Activated CD4-positive, alpha-beta T cell treated with anti-CD3 and anti-CD28 coated beads for 36 hours (primary cell): ENCODE measurements at regions of chr3 and their contacts with region 1.

Region 1: DNA sequence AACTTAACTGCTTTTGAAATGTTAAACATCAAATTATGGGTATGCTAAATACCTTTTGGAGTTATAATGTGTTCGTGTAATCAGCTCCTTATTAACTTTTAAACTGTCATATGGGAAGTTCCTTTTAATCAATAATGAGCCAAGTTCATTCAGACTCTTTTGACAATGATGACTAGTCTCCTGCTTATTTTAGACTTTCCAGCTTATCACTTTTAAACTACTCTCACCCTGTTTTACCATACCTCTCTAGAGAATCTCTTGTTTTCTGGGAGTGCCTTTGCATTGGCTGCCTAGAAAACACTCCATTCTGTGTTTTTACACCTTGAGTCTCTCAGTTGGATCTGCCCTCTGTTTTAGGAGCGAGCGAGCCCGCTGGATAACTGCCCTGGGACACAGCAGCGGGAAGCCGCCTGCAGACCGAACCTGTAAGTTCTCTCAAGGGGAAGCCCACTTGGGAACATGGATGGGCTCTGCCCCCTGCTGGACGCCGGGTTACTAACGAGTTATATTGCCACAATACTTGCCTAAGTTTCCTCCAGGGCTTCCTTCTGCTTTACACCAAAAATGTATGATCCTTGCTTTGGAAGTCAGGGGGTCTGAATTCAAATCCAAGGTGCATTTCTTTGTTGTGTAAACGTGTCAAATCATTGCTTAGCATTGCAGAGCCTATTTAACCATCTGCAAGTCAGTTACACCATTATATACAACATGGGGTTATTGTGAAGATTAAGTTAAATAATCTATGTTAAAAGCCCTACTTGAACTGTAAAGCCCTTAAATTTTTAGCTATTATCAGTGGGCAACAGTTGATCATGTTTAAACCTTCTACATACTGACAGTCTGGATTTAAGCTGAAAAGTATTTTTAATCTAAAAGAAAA is 71.3 kb downstream of the DHX36 start:
- DNase-seq: peak; percentile 86
- ATAC-seq: peak; percentile 82
- H3K4me3 Mint-ChIP-seq: no peak overlapping the region
- H3K27ac Mint-ChIP-seq: no peak overlapping the region
- H3K4me1 Mint-ChIP-seq: no peaks in the 10 kb centered on the region
- H3K27me3 Mint-ChIP-seq: no peaks in the 10 kb centered on the region

Region 2: GRCh38 chr3:153026026-153026425 is 1227.0 kb before region 1 on chr3:
- CTCF ChIA-PET with region 1: no interaction called
- POLR2A ChIA-PET with region 1: no interaction called
- intact Hi-C with region 1: loop called in 1 of 2 experiments (anchors 5 kb)
- DNase-seq: no peak
- ATAC-seq: no peak
- H3K4me3 Mint-ChIP-seq: no peak overlapping the region
- H3K27ac Mint-ChIP-seq: no peak overlapping the region
- H3K4me1 Mint-ChIP-seq: no peaks in the 10 kb centered on the region
- H3K27me3 Mint-ChIP-seq: peaks cover 1% of the 10 kb centered on the region

Region 3: GRCh38 chr3:154040286-154040685 is 212.7 kb before region 1 on chr3:
- CTCF ChIA-PET with region 1: no interaction called
- POLR2A ChIA-PET with region 1: no interaction called
- intact Hi-C with region 1: loop called (anchors 1 to 2 kb)
- DNase-seq: no peak
- ATAC-seq: peak; percentile 44
- H3K4me3 Mint-ChIP-seq: no peak overlapping the region
- H3K27ac Mint-ChIP-seq: no peak overlapping the region
- H3K4me1 Mint-ChIP-seq: no peaks in the 10 kb centered on the region
- H3K27me3 Mint-ChIP-seq: no peaks in the 10 kb centered on the region

Region 4: DNA sequence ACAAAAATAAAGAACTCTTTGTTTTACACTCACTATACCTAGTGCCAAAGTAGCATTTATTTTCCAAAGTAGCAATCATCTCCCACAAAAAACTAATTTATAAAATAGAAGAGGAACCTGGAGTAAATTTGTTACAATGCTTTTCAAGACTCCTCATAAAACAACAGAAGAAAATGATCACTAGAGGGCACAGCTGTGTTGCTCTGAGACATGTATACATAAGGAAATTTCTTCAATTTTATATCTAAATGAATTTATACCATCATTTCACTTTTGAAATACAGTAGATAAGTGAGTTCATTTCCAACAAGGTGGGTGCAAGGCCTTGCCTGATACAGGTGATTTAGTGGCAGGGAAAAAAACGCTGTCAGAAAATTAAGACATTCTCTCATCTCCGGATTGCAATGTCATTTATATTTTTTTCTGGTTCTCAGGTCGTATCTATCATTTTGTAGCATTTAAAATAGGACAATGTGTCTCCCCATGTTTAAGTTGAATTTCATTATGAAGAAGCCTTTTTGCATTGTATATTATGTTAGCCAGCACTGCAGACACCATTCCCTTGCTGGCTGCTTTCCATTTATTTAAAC is 157.1 kb before region 1 on chr3:
- CTCF ChIA-PET with region 1: interaction called, 9 read pairs
- POLR2A ChIA-PET with region 1: no interaction called
- intact Hi-C with region 1: loop called (anchors 1 kb)
- DNase-seq: no peak
- ATAC-seq: no peak
- H3K4me3 Mint-ChIP-seq: no peak overlapping the region
- H3K27ac Mint-ChIP-seq: no peak overlapping the region
- H3K4me1 Mint-ChIP-seq: no peaks in the 10 kb centered on the region
- H3K27me3 Mint-ChIP-seq: peaks cover 4% of the 10 kb centered on the region

Region 5: DNA sequence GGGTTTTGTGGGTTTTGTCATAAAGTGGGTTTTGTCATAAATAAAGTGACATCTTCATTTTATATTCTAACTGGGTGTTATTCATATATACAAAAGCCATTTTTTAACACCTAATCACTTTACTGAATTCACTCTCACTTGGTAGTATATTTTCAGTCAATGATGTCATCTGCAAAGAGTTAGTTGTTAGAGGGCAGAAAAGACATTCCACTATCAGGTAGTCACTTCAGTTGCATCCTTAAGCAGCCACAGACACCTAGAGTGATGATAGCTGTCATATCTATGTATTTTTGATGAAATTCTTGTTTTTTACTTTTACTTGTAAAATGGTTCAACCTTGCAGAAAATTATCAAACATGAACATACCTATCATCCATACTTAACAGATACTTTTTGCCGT is 17.7 kb before region 1 on chr3:
- CTCF ChIA-PET with region 1: interaction called, 15 read pairs
- POLR2A ChIA-PET with region 1: no interaction called
- intact Hi-C with region 1: no loop called
- DNase-seq: no peak
- ATAC-seq: no peak
- H3K4me3 Mint-ChIP-seq: no peak overlapping the region
- H3K27ac Mint-ChIP-seq: no peak overlapping the region
- H3K4me1 Mint-ChIP-seq: peaks cover 12% of the 10 kb centered on the region
- H3K27me3 Mint-ChIP-seq: peaks cover 26% of the 10 kb centered on the region

Region 6: GRCh38 chr3:155946178-155946577 is 1693.2 kb after region 1 on chr3:
- CTCF ChIA-PET with region 1: no interaction called
- POLR2A ChIA-PET with region 1: no interaction called
- intact Hi-C with region 1: no loop called
- DNase-seq: no peak
- ATAC-seq: no peak
- H3K4me3 Mint-ChIP-seq: no peak overlapping the region
- H3K27ac Mint-ChIP-seq: no peak overlapping the region
- H3K4me1 Mint-ChIP-seq: no peaks in the 10 kb centered on the region
- H3K27me3 Mint-ChIP-seq: no peaks in the 10 kb centered on the region